Head of caudate nucleus (tissue), 42 donors: ENCODE measurements at regions of chr14 and their contacts with region 1.

Region 1: DNA sequence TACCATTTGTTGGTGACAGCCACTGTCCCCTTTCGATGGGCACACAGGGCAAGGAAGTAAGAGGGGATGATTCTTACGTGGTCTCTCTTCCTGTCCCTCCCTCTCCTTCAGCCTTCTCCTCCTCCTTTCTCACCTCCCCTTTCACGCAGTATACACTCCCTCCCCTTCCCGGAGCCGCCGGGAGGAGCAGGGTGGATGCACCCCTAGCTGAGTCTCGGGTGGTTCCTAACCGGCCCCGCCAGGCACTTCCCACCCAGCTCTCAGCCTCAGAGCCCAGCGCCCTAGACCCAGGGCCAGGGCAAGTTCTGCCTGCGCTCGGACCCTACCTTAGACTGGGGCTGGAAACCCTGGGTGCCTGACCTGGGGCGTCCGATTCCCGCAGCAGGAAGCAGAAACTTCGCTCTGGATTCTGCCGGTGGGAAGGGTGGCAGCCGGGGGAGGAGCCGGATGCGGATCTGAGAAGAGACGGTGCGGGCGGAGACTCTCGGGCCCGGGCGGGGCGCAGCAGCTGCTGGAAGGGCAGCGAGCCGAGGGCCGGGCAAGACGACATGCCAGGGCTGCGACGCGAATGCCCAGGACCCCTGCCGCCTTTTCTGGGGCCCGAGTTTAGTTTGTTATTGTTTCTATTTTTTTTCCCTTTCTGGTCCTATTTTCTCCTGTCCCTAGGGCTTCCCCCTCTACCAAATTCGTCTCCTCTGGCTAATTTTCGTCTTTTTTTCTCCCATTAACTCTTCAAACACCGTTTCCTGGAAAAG is at the start of gene TEP1:
- DNase-seq: peak; percentile 71 to 95 (median 86)

Region 2: DNA sequence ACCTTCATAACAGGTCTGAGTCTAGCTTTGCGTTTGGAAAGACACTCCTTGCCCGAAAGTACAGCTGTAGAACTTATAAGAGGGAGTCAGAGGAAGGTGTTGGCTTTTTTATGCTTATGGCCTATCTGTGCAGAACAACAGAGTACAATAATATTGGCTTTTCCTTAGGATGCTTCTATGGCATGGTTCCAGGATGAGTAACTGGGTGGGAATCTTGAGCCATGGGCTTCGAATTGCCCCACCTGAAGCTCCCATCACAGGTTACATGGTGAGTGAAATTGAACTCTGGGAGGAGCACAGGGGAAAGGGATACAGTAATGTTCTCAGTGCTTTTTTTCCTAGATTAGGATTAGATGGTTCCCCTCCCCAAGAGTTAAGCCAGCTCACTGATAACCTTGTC is 56.8 kb before region 1 on chr14:
- intact Hi-C with region 1: no loop called
- DNase-seq: no peak

Region 3: GRCh38 chr14:20376071-20376588 is 37.1 kb before region 1 on chr14:
- intact Hi-C with region 1: no loop called
- DNase-seq: no peak

Region 4: DNA sequence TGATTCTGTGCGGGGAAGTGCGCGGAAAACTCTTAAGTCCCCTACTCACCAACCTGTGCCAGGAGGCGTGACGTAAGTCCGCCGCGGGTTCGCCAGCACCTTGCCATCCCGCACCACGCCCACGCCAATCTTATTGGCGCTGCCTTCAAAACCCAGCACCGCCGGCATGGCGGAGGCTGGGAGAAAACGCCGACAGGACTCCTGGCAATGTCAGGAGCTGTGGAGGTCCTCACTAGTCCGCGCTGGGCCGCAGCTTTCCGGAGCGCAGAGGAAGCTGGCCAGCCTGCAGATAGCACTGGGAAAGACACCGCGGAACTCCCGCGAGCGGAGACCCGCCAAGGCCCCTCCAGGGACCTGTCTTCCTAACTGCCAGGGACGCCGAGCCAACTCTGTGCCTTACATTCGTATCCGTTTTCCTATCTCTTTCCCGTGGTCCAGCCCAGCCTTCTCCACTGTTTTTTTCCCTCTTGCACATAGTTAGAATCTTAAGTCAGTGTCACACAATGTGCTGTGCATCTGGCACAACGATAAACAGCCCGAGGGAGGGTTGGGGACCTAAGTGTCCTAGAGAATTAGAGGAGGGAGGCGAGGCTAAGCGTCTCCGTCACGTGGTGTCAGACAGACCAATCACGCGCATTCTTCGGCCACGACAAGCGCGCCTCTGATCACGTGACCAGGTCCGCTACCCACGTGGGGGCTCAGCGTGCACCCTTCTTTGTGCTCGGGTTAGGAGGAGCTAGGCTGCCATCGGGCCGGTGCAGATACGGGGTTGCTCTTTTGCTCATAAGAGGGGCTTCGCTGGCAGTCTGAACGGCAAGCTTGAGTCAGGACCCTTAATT is 41.5 kb after region 1 on chr14 and contains the starts of genes APEX1 and OSGEP:
- intact Hi-C with region 1: loop called (anchors 2 kb)
- DNase-seq: peak; percentile 95 to 100 (median 99)